Naive thymus-derived CD4-positive, alpha-beta T cell (primary cell): ENCODE measurements at regions of chr9 and their contacts with region 1.

Region 1: GRCh38 chr9:114487607-114488300 is 17.5 kb downstream of the WHRN start:
- DNase-seq: peak; percentile 25 to 80 (median 62)
- ATAC-seq: peak; percentile 92
- H3K4me3 ChIP-seq: no peak overlapping the region
- H3K4me3 Mint-ChIP-seq: no peak overlapping the region
- H3K27ac ChIP-seq: no peak overlapping the region
- H3K27ac Mint-ChIP-seq: peak overlapping the region in 2 of 9 donors; percentile 8 to 57
- H3K4me1 ChIP-seq: peaks cover 0 to 9% of the 10 kb centered on the region in 2 donors
- H3K4me1 Mint-ChIP-seq: peaks cover 0 to 30% (median 0%) of the 10 kb centered on the region in 7 donors
- H3K27me3 ChIP-seq: no peaks in the 10 kb centered on the region
- H3K27me3 Mint-ChIP-seq: peaks cover 0 to 4% (median 0%) of the 10 kb centered on the region in 5 donors

Region 2: GRCh38 chr9:114339130-114339908 is 148.4 kb before region 1 on chr9:
- CTCF ChIA-PET with region 1: no interaction called
- POLR2A ChIA-PET with region 1: no interaction called
- intact Hi-C with region 1: loop called in 1 of 2 experiments (anchors 1 kb)
- DNase-seq: peak in 8 of 9 donors; percentile 19 to 64 (median 50)
- ATAC-seq: peak; percentile 83
- H3K4me3 ChIP-seq: no peak overlapping the region
- H3K4me3 Mint-ChIP-seq: no peak overlapping the region
- H3K27ac ChIP-seq: peak overlapping the region; percentile 14
- H3K27ac Mint-ChIP-seq: peak overlapping the region in 6 of 9 donors; percentile 15 to 76 (median 67)
- H3K4me1 ChIP-seq: no peaks in the 10 kb centered on the region
- H3K4me1 Mint-ChIP-seq: peaks cover 8 to 37% (median 17%) of the 10 kb centered on the region in 7 donors
- H3K27me3 ChIP-seq: no peaks in the 10 kb centered on the region
- H3K27me3 Mint-ChIP-seq: no peaks in the 10 kb centered on the region

Region 3: GRCh38 chr9:114405294-114406034 is 82.3 kb before region 1 on chr9:
- CTCF ChIA-PET with region 1: interaction called, 5 read pairs
- POLR2A ChIA-PET with region 1: no interaction called
- intact Hi-C with region 1: loop called (anchors 1 to 5 kb)
- DNase-seq: peak; percentile 56 to 84 (median 80)
- ATAC-seq: peak; percentile 97
- H3K4me3 ChIP-seq: no peak overlapping the region
- H3K4me3 Mint-ChIP-seq: no peak overlapping the region
- H3K27ac ChIP-seq: no peak overlapping the region
- H3K27ac Mint-ChIP-seq: peak overlapping the region in 6 of 9 donors; percentile 16 to 91 (median 60)
- H3K4me1 ChIP-seq: peaks cover 4 to 11% of the 10 kb centered on the region in 2 donors
- H3K4me1 Mint-ChIP-seq: peaks cover 6 to 10% (median 6%) of the 10 kb centered on the region in 7 donors
- H3K27me3 ChIP-seq: no peaks in the 10 kb centered on the region
- H3K27me3 Mint-ChIP-seq: no peaks in the 10 kb centered on the region

Region 4: DNA sequence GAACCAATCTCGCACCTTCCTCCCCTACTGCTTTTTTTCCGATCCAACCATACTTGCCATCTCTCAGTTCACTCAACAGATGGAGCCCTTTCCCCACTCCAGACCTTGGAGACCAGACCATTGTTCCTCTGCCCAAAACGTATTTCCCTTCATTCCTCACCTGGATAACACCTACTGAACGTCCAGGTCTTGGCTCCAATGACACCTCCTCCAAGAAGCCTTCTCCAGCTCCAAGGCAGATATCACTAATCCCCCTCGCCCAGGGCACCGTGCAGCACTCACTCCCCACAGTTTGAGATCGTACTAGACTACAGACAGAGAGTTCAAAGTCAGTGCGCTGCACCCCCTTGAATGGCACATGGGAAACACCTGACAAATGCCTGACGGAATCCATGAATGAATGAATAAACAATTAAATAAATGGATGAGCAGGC is 52.9 kb before region 1 on chr9:
- CTCF ChIA-PET with region 1: interaction called, 3 read pairs
- POLR2A ChIA-PET with region 1: interaction called, 3 read pairs
- intact Hi-C with region 1: loop called in 1 of 2 experiments (anchors 5 kb)
- DNase-seq: peak in 4 of 9 donors; percentile 9 to 20 (median 15)
- ATAC-seq: no peak
- H3K4me3 ChIP-seq: no peak overlapping the region
- H3K4me3 Mint-ChIP-seq: no peak overlapping the region
- H3K27ac ChIP-seq: no peak overlapping the region
- H3K27ac Mint-ChIP-seq: no peak overlapping the region
- H3K4me1 ChIP-seq: no peaks in the 10 kb centered on the region
- H3K4me1 Mint-ChIP-seq: peaks cover 0 to 5% (median 4%) of the 10 kb centered on the region in 7 donors
- H3K27me3 ChIP-seq: no peaks in the 10 kb centered on the region
- H3K27me3 Mint-ChIP-seq: peaks cover 0 to 16% (median 0%) of the 10 kb centered on the region in 5 donors

Region 5: DNA sequence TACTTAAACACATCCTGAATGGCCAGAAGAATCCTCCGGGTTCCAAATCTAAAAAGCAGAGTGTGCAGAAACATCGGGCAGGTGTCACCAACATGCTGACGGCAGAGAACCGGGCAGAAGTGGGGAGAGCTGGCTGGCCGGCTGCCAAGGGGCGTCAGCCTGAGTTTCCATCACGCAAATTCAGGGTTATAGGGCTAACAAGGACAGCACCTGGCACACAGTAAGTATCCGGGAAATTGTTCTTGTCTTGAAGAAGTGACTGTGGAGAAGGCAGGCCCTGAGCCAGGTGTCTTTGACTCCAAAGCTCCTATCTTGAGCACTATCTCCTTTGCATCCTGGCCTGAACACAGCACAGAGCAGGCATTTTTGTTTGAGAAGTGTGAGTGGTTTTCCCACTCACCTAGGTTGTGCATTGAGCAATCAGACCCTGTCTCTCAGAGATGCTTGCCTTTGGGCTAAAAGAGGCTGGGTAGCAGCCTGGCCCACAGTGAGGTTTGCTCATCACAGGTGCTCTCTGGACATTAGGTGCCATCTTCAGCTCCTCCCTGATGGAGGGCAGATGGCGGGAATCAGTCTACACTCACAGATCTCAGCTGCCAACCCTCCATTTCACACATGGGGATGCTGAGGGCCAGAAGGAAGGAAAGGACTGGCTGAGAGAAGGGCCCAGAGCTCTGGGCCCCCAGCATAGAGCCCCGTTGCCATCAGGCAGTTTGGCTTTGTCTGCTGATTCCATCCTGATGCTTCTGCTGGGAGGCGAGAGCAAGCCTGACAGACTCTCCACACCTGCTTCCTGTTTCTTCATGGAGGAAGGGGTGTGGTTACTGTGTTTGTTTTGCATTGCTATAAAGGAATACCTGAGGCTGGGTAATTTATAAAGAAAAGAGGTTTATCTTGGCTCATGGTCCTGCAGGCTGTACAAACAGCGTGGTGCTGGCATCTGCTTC is 35.3 kb before region 1 on chr9:
- CTCF ChIA-PET with region 1: no interaction called
- POLR2A ChIA-PET with region 1: interaction called, 3 read pairs
- intact Hi-C with region 1: loop called in 1 of 2 experiments (anchors 5 kb)
- DNase-seq: peak in 7 of 9 donors; percentile 33 to 55 (median 45)
- ATAC-seq: no peak
- H3K4me3 ChIP-seq: peak overlapping the region; percentile 23
- H3K4me3 Mint-ChIP-seq: peak overlapping the region; percentile 18 to 66 (median 48)
- H3K27ac ChIP-seq: peak overlapping the region; percentile 42
- H3K27ac Mint-ChIP-seq: peak overlapping the region; percentile 63 to 95 (median 84)
- H3K4me1 ChIP-seq: peaks cover 7 to 22% of the 10 kb centered on the region in 2 donors
- H3K4me1 Mint-ChIP-seq: peaks cover 15 to 34% (median 24%) of the 10 kb centered on the region in 7 donors
- H3K27me3 ChIP-seq: no peaks in the 10 kb centered on the region
- H3K27me3 Mint-ChIP-seq: peaks cover 0 to 30% (median 0%) of the 10 kb centered on the region in 5 donors

Region 6: GRCh38 chr9:114538241-114538640 is 50.5 kb after region 1 on chr9:
- CTCF ChIA-PET with region 1: interaction called, 4 read pairs
- POLR2A ChIA-PET with region 1: no interaction called
- intact Hi-C with region 1: loop called in 1 of 2 experiments (anchors 2 kb)
- DNase-seq: peak in 7 of 9 donors; percentile 11 to 43 (median 23)
- ATAC-seq: peak; percentile 92
- H3K4me3 ChIP-seq: no peak overlapping the region
- H3K4me3 Mint-ChIP-seq: no peak overlapping the region
- H3K27ac ChIP-seq: no peak overlapping the region
- H3K27ac Mint-ChIP-seq: peak overlapping the region in 4 of 9 donors; percentile 13 to 67 (median 42)
- H3K4me1 ChIP-seq: no peaks in the 10 kb centered on the region
- H3K4me1 Mint-ChIP-seq: peaks cover 0 to 13% (median 7%) of the 10 kb centered on the region in 7 donors
- H3K27me3 ChIP-seq: no peaks in the 10 kb centered on the region
- H3K27me3 Mint-ChIP-seq: peaks cover 0 to 38% (median 0%) of the 10 kb centered on the region in 5 donors

Region 7: DNA sequence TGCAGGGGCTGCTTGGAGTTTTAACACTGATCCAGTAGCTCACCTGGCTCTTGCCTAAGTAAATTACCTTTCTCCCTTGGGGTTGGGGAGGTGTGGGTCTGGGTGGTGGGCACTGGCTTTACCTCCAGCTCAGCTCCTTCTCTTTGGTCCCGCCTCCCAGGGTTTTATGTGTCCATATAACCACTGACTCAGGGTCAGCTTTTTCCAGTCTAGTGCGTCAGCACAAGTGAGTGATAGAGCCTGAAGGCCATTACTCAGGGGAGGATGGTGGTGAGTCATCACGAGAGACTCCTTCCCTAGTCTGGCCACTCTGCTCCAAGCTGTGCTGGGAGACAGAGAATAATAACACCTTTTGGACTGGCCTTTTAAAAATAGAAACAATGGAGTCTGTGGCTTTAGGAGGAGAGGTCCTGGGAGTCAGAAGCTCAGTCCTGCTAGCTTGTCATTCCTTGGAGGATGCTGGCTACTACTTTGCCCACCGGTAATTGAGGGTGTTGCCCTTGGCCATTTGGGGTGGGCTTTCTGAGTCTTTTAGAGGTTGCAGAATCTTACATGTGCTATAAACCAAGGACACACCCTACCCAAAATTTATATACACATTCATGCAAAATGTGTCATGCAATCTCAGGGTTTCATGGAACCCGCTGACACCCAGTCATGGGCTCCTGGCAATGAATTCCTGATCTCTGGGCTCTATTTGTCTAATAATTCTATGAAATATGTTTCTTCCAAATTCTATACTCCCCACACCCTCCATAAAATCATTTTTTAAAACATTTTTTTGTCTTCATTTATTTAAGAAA is 64.3 kb after region 1 on chr9:
- CTCF ChIA-PET with region 1: no interaction called
- POLR2A ChIA-PET with region 1: no interaction called
- intact Hi-C with region 1: no loop called
- DNase-seq: no peak
- ATAC-seq: peak; percentile 70
- H3K4me3 ChIP-seq: no peak overlapping the region
- H3K4me3 Mint-ChIP-seq: no peak overlapping the region
- H3K27ac ChIP-seq: no peak overlapping the region
- H3K27ac Mint-ChIP-seq: no peak overlapping the region
- H3K4me1 ChIP-seq: no peaks in the 10 kb centered on the region
- H3K4me1 Mint-ChIP-seq: peaks cover 0 to 2% (median 0%) of the 10 kb centered on the region in 7 donors
- H3K27me3 ChIP-seq: peaks cover 0 to 2% of the 10 kb centered on the region in 2 donors
- H3K27me3 Mint-ChIP-seq: peaks cover 0 to 32% (median 5%) of the 10 kb centered on the region in 5 donors

Region 8: GRCh38 chr9:114718801-114719221 is 231.1 kb after region 1 on chr9:
- CTCF ChIA-PET with region 1: no interaction called
- POLR2A ChIA-PET with region 1: no interaction called
- intact Hi-C with region 1: no loop called
- DNase-seq: peak in 5 of 9 donors; percentile 8 to 91 (median 18)
- ATAC-seq: peak; percentile 76
- H3K4me3 ChIP-seq: no peak overlapping the region
- H3K4me3 Mint-ChIP-seq: peak overlapping the region in 9 of 10 donors; percentile 0 to 75 (median 19)
- H3K27ac ChIP-seq: no peak overlapping the region
- H3K27ac Mint-ChIP-seq: peak overlapping the region in 6 of 9 donors; percentile 12 to 97 (median 64)
- H3K4me1 ChIP-seq: peaks cover 14 to 34% of the 10 kb centered on the region in 2 donors
- H3K4me1 Mint-ChIP-seq: peaks cover 10 to 88% (median 20%) of the 10 kb centered on the region in 7 donors
- H3K27me3 ChIP-seq: no peaks in the 10 kb centered on the region
- H3K27me3 Mint-ChIP-seq: no peaks in the 10 kb centered on the region